ENCODE measurements at regions of chr13 and their contacts with region 1.

Region 1: DNA sequence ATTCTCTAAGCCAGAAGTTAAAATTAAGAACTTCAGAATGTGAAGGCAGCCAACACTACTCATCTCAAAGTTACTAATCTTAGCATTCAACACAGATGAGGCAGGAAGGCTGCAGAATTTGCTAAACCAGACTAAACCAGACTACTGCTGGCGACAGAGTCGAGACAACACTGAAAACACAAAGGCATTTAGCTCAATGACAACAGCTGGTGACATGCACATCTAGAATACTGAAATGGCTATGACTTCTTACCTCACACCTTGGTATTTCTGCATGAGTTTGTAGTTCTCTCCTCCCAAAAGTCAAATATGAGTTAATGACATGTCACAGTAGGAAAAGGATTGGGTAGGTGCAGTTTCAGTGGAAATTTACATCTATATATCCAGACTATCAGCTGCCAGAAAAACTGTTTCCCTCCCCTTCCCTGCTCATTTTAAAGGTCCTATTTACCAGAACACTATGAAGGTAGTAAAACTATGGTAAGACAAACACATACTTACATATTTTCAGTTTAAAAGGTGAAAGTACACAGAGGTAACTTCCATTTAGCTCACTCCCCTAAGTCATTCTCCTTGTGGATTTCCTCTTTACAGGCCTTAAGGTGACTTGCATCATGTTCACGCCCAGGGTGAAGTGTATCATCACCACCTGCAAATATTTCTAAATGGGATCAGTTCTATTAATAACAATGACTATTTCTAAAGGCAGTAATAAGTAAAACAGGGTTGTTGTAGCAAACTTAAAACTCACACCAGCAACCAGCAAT is 21.4 kb downstream of the FOXO1 start:
- DNase-seq: peak; percentile 59
- H3K4me3 Mint-ChIP-seq: peak overlapping the region; percentile 38
- H3K27ac Mint-ChIP-seq: peak overlapping the region; percentile 89
- H3K4me1 Mint-ChIP-seq: peaks cover 92% of the 10 kb centered on the region
- H3K27me3 Mint-ChIP-seq: no peaks in the 10 kb centered on the region

Region 2: GRCh38 chr13:40464337-40465014 is 180.5 kb before region 1 on chr13:
- CTCF ChIA-PET with region 1: no interaction called
- intact Hi-C with region 1: no loop called
- DNase-seq: no peak
- H3K4me3 Mint-ChIP-seq: no peak overlapping the region
- H3K27ac Mint-ChIP-seq: no peak overlapping the region
- H3K4me1 Mint-ChIP-seq: no peaks in the 10 kb centered on the region
- H3K27me3 Mint-ChIP-seq: no peaks in the 10 kb centered on the region

Region 3: GRCh38 chr13:40613192-40613818 is 31.7 kb before region 1 on chr13:
- CTCF ChIA-PET with region 1: no interaction called
- intact Hi-C with region 1: loop called (anchors 1 kb)
- DNase-seq: peak; percentile 73
- H3K4me3 Mint-ChIP-seq: peak overlapping the region; percentile 71
- H3K27ac Mint-ChIP-seq: peak overlapping the region; percentile 95
- H3K4me1 Mint-ChIP-seq: peaks cover 93% of the 10 kb centered on the region
- H3K27me3 Mint-ChIP-seq: no peaks in the 10 kb centered on the region

Region 4: DNA sequence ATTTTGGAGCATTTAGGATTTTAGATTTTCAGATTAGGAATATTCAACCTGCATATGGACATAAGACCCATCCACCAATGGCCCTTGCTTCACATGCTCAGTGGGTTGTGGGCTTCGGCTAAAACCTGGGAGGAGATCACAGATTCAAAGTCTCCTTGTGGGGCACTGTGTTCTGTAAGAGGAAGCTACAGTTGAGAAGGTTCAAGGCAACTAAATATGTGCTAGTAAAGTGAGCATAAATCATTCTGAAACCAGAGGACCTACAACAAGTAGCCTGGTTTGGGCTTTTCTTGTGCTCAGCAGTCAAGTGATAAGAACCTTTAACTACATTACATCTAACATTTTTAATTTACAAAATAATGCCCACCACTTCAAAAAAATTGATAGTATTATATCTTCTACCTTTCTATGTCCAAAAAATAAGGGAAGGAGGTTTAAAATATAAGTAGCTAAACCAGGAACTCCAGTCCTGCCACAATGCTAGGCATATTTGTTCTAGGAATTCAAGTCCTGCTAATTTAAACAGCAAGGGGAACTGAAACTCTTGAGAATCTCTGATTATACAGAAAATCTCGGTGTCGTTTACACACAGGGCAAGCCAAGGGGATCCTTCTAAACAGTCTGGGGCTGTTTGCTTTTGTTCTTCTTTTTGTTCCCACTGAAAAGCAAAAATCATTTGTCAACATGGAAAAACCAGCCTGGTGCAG is 15.2 kb before region 1 on chr13:
- CTCF ChIA-PET with region 1: interaction called, 3 read pairs
- intact Hi-C with region 1: loop called (anchors 2 kb)
- DNase-seq: no peak
- H3K4me3 Mint-ChIP-seq: no peak overlapping the region
- H3K27ac Mint-ChIP-seq: peak overlapping the region; percentile 73
- H3K4me1 Mint-ChIP-seq: peaks cover 84% of the 10 kb centered on the region
- H3K27me3 Mint-ChIP-seq: no peaks in the 10 kb centered on the region

Region 5: GRCh38 chr13:42271337-42272114 is 1626.5 kb after region 1 on chr13:
- CTCF ChIA-PET with region 1: no interaction called
- intact Hi-C with region 1: no loop called
- DNase-seq: peak; percentile 95
- H3K4me3 Mint-ChIP-seq: peak overlapping the region; percentile 94
- H3K27ac Mint-ChIP-seq: peak overlapping the region; percentile 88
- H3K4me1 Mint-ChIP-seq: peaks cover 46% of the 10 kb centered on the region
- H3K27me3 Mint-ChIP-seq: no peaks in the 10 kb centered on the region